ENCODE measurements at regions of chr9 and their contacts with region 1.

Region 1: GRCh38 chr9:130101915-130102314 is 48.2 kb downstream of the GPR107 start:
- DNase-seq: no peak
- ATAC-seq: no peak
- H3K4me3 ChIP-seq: no peak overlapping the region
- H3K27ac ChIP-seq: no peak overlapping the region
- H3K4me1 ChIP-seq: no peaks in the 10 kb centered on the region
- H3K27me3 ChIP-seq: no peaks in the 10 kb centered on the region
- CTCF ChIP-seq: no peak

Region 2: GRCh38 chr9:129696938-129697650 is 404.8 kb before region 1 on chr9:
- CTCF ChIA-PET with region 1: interaction called, 10 read pairs
- POLR2A ChIA-PET with region 1: no interaction called
- in situ Hi-C with region 1: no loop called
- intact Hi-C with region 1: no loop called
- DNase-seq: no peak
- ATAC-seq: peak; percentile 84
- H3K4me3 ChIP-seq: peak overlapping the region; percentile 33 to 49
- H3K27ac ChIP-seq: no peak overlapping the region
- H3K4me1 ChIP-seq: no peaks in the 10 kb centered on the region
- H3K27me3 ChIP-seq: no peaks in the 10 kb centered on the region
- CTCF ChIP-seq: no peak

Region 3: GRCh38 chr9:130053504-130054324 is 48.2 kb before region 1 on chr9 and contains the start of gene GPR107:
- CTCF ChIA-PET with region 1: no interaction called
- POLR2A ChIA-PET with region 1: no interaction called
- in situ Hi-C with region 1: no loop called
- intact Hi-C with region 1: no loop called
- DNase-seq: no peak
- ATAC-seq: peak; percentile 95
- H3K4me3 ChIP-seq: peak within 1 kb of the TSS; percentile 72 to 76
- H3K27ac ChIP-seq: peak within 1 kb of the TSS; percentile 93
- H3K4me1 ChIP-seq: 0 out of 2 replicates have a peak, but pooled peaks cover 3% of the 10 kb centered on the region
- H3K27me3 ChIP-seq: no peaks in the 10 kb centered on the region
- CTCF ChIP-seq: no peak
- total RNA-seq, gene GPR107: 43.0 TPM

Measured in Panc1 (cell line).